Aorta (tissue), 5 donors: ENCODE measurements at regions of chr12 and their contacts with region 1.

Region 1: GRCh38 chr12:46219884-46220655 is 48.8 kb downstream of the SLC38A1 start:
- DNase-seq: no peak
- ATAC-seq: no peak
- H3K4me3 ChIP-seq: no peak overlapping the region
- H3K27ac ChIP-seq: no peak overlapping the region
- H3K4me1 ChIP-seq: peaks cover 0 to 3% of the 10 kb centered on the region in 2 donors
- H3K27me3 ChIP-seq: no peaks in the 10 kb centered on the region

Region 2: GRCh38 chr12:46260151-46260918 is 40.3 kb after region 1 on chr12:
- intact Hi-C with region 1: loop called (anchors 5 kb)
- DNase-seq: no peak
- ATAC-seq: no peak
- H3K4me3 ChIP-seq: no peak overlapping the region
- H3K27ac ChIP-seq: peak overlapping the region in 1 of 2 donors; percentile 40
- H3K4me1 ChIP-seq: peaks cover 0 to 8% of the 10 kb centered on the region in 2 donors
- H3K27me3 ChIP-seq: no peaks in the 10 kb centered on the region